Activated CD8-positive, alpha-beta T cell treated with anti-CD3 and anti-CD28 coated beads, Interleukin-2, amount 10 ng/mL, durations not matched to agents 7 days and 5 days (primary cell): ENCODE measurements at regions of chr3 and their contacts with region 1.

Region 1: GRCh38 chr3:133475245-133476010 is 75.6 kb downstream of the BFSP2 start:
- DNase-seq: peak; percentile 50
- ATAC-seq: peak; percentile 91
- H3K4me3 Mint-ChIP-seq: no peak overlapping the region
- H3K27ac Mint-ChIP-seq: peak overlapping the region; percentile 53
- H3K4me1 Mint-ChIP-seq: peaks cover 57% of the 10 kb centered on the region
- H3K27me3 Mint-ChIP-seq: no peaks in the 10 kb centered on the region

Region 2: GRCh38 chr3:133464573-133464972 is 10.9 kb before region 1 on chr3:
- CTCF ChIA-PET with region 1: interaction called, 19 read pairs
- POLR2A ChIA-PET with region 1: interaction called, 3 read pairs
- DNase-seq: no peak
- ATAC-seq: no peak
- H3K4me3 Mint-ChIP-seq: no peak overlapping the region
- H3K27ac Mint-ChIP-seq: no peak overlapping the region
- H3K4me1 Mint-ChIP-seq: peaks cover 46% of the 10 kb centered on the region
- H3K27me3 Mint-ChIP-seq: no peaks in the 10 kb centered on the region

Region 3: DNA sequence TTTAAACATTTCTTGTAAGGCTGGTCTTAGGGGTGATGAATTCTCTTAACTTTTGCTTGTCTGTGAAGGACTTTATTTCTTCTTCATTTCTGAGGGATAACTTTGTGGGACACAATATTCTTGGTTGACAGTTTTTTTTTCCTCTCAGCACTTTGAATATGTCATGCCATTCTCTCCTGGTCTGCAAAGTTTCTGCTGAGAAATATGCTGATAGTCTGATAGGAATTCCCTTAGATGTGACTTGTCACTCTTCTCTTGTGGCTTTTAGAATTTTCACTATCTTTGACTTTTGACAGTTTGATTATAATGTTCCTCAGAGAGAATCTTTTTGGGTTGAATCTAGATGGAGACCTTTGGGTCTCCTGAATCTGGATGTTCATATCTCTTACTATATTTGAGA is 247.5 kb after region 1 on chr3:
- CTCF ChIA-PET with region 1: no interaction called
- POLR2A ChIA-PET with region 1: no interaction called
- DNase-seq: no peak
- ATAC-seq: no peak
- H3K4me3 Mint-ChIP-seq: no peak overlapping the region
- H3K27ac Mint-ChIP-seq: no peak overlapping the region
- H3K4me1 Mint-ChIP-seq: no peaks in the 10 kb centered on the region
- H3K27me3 Mint-ChIP-seq: peaks cover 13% of the 10 kb centered on the region